ENCODE measurements at regions of chr4 and their contacts with region 1.

Region 1: GRCh38 chr4:165131247-165131832 is 18.7 kb upstream of the TMEM192 start:
- DNase-seq: peak; percentile 88
- ATAC-seq: peak; percentile 83
- H3K4me3 Mint-ChIP-seq: no peak overlapping the region
- H3K27ac Mint-ChIP-seq: no peak overlapping the region
- H3K4me1 Mint-ChIP-seq: peaks cover 24% of the 10 kb centered on the region
- H3K27me3 Mint-ChIP-seq: peaks cover 11% of the 10 kb centered on the region

Region 2: DNA sequence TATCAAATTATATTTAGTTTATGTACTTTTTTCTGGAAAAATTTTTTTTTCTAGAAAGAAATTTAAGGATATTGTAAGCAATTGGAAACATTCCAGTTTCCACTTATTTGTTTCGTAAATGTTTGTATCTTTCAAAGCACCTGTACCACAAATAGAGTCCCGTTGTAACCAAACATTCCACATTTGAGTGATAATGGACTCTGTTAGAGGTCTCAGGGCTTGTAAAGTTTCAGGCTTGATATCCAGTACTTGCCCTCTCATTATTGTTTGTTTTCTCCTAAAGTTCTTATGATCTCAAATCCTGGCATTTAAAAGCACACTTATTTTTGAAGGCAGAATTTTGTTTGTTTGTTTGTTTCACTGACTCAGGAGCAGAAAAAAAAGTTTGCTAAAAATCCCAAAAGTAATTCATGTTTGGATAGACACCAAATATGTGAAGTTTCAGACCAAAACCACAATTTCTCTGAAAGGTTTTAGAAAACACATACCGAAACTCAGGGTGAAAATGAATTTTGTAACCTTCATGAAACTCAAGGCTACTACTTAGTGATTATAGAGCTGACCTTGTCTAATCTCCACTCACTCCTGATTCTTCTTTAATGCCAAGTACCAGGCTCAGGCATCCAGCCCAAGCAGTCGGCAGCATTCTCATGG is 13.0 kb before region 1 on chr4:
- CTCF ChIA-PET with region 1: interaction called, 39 read pairs
- POLR2A ChIA-PET with region 1: no interaction called
- DNase-seq: no peak
- ATAC-seq: no peak
- H3K4me3 Mint-ChIP-seq: no peak overlapping the region
- H3K27ac Mint-ChIP-seq: no peak overlapping the region
- H3K4me1 Mint-ChIP-seq: peaks cover 11% of the 10 kb centered on the region
- H3K27me3 Mint-ChIP-seq: peaks cover 14% of the 10 kb centered on the region

Region 3: GRCh38 chr4:165217325-165217724 is 86.0 kb after region 1 on chr4:
- CTCF ChIA-PET with region 1: no interaction called
- POLR2A ChIA-PET with region 1: no interaction called
- DNase-seq: no peak
- ATAC-seq: no peak
- H3K4me3 Mint-ChIP-seq: no peak overlapping the region
- H3K27ac Mint-ChIP-seq: peak overlapping the region; percentile 50
- H3K4me1 Mint-ChIP-seq: peaks cover 70% of the 10 kb centered on the region
- H3K27me3 Mint-ChIP-seq: no peaks in the 10 kb centered on the region

Region 4: DNA sequence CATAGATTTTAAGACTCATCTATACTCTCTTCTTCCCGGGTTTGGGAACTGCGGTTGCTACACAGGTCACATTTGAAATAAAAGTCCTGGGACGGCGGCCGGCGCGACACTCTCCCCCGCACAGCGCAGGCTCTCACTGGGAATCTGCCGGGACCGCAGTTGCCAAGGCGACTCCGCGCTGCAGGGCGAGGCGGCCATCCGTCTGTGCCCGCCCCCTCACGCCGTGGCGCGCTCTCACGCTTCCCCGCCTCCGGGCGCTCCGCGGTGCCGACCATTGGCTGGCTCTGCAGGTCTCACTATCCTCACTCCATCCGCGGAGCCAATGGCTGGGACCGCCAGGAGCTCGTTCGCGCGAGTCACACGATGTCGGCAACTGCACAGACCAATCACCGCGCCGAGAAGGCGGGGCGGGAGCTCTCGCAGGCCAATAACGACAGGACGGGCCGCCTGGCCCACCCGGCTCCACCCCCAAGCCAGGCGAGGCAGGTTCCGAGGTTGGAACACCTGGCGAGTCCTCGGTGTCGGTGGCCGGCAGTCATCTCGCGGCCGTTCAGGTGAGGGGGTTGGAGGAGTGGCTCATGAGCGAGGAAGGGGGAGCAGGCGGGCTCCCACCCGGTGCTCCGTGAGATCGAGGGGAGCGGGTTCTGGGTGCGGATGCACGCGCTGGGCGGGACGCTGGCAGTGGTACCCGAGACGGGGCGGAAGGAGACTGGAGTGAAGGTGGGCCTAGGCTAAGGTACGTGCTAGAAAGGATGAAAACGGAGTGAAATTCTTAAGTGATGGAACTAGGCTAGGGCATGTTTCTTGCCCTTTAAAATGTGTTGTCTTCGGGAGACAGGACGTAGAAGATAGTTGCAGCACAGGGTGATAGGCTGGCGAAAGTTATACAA is 196.1 kb after region 1 on chr4 and contains the start of gene MSMO1:
- CTCF ChIA-PET with region 1: interaction called, 11 read pairs
- POLR2A ChIA-PET with region 1: no interaction called
- DNase-seq: peak; percentile 99
- ATAC-seq: peak; percentile 99
- H3K4me3 Mint-ChIP-seq: no peak within 1 kb of the TSS
- H3K27ac Mint-ChIP-seq: peak within 1 kb of the TSS; percentile 60
- H3K4me1 Mint-ChIP-seq: peaks cover 41% of the 10 kb centered on the region
- H3K27me3 Mint-ChIP-seq: no peaks in the 10 kb centered on the region
- total RNA-seq, gene MSMO1: 47.4 to 51.6 TPM

Region 5: DNA sequence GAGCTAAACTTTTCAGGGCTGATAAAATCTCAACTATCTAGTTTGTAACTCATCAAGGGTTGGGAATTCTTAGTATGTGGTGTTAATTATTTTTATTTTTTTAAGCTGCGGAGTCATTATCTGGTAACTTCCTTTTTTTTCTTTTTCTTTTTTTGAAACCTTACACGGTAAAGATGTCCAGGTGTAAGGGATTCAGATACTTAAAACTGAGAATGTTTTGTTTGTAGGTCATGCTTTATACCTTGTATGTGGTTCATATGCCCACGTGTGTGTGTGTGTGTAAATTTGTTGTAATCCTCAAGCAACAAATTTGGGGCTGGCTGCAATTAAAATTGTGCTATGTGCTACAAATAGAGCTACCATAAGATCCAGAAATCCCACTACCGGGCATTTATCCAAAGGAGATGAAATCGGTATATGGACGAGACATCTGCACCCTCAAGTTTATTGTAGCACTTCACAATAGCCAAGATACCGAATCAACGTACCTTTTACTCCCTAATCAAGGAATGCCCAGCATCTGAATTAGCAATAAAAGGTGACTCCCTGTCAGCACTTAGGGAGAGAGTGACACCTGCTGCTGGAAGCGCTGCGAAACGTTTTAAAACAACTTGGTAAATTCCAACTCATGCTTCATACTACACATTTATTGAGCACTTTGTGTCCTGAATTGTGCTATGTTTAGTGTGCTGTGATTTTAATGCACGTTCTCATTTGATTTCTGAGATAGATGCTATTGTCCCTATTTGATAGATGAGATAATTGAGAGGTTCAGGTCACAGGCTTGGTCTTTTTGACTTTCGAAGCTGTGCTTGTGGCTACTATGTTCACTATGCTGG is 212.2 kb after region 1 on chr4:
- CTCF ChIA-PET with region 1: interaction called, 75 read pairs
- POLR2A ChIA-PET with region 1: no interaction called
- DNase-seq: no peak
- ATAC-seq: no peak
- H3K4me3 Mint-ChIP-seq: no peak overlapping the region
- H3K27ac Mint-ChIP-seq: no peak overlapping the region
- H3K4me1 Mint-ChIP-seq: peaks cover 7% of the 10 kb centered on the region
- H3K27me3 Mint-ChIP-seq: no peaks in the 10 kb centered on the region

Region 6: DNA sequence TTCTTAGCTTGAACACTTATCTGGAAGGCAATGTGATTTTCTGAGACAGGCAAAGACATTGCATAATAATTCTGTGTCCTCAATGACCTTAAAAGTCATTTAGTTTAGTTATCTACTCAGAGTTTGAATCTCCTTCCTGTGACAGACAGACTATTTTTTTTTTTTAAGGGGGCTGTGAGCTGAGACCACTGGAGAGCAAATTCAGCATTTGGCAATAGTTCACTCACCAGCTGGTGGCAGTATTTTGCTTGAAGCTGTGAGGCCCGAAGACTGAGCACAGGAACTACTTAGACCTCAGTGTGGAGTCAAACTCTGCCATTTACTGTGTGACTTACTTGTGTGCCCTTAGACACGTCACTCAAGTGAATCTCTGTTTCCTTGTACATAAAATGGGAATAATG is 224.6 kb after region 1 on chr4:
- CTCF ChIA-PET with region 1: interaction called, 10 read pairs
- POLR2A ChIA-PET with region 1: no interaction called
- DNase-seq: peak; percentile 37
- ATAC-seq: no peak
- H3K4me3 Mint-ChIP-seq: no peak overlapping the region
- H3K27ac Mint-ChIP-seq: no peak overlapping the region
- H3K4me1 Mint-ChIP-seq: peaks cover 2% of the 10 kb centered on the region
- H3K27me3 Mint-ChIP-seq: peaks cover 32% of the 10 kb centered on the region

Region 7: GRCh38 chr4:165464813-165465381 is 333.6 kb after region 1 on chr4:
- CTCF ChIA-PET with region 1: interaction called, 14 read pairs
- POLR2A ChIA-PET with region 1: no interaction called
- DNase-seq: peak; percentile 36
- ATAC-seq: peak; percentile 61
- H3K4me3 Mint-ChIP-seq: no peak overlapping the region
- H3K27ac Mint-ChIP-seq: no peak overlapping the region
- H3K4me1 Mint-ChIP-seq: no peaks in the 10 kb centered on the region
- H3K27me3 Mint-ChIP-seq: peaks cover 10% of the 10 kb centered on the region